AG04449 (cell line): ENCODE measurements at regions of chr17 and their contacts with region 1.

Region 1: DNA sequence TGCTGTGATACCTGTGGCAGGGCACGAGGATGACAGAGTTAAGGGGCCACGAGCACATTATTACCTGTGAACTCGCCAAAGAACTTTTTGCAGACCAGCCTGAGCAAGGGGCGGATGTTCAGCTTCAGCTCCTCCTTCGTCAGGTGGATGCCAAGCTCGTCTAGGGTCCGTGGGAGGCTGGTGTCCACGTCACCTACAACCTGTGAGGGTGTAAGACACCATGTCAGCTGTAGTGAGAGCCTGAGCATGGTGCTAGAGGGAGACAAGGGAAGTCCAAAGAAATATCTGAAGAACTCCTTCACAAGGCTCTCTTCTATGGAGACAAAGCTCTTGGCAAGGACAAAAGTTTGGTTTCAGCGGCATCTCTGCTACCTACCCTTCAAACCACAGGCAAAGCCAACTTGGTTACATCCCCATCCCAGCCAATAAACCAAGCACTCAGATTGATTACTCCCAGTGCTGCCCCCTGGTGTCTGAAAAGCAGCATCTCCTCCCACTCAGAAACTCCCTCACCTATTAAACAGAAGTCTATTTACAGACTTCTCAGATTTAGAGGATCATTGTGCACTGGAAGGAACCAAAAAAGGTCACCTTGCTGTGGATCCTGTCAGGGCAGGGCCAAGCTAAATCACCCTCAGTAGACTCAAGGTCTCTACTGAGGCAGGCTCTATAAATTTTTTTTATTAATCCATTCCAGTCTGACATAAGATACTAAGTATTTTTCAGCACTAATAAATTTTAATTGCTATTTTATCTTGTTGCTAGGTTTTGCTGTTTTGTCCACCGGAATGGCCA is 17.4 kb downstream of the HIGD1B start:
- DNase-seq: no peak
- H3K4me3 ChIP-seq: no peak overlapping the region
- CTCF ChIP-seq: peak; percentile 70

Region 2: GRCh38 chr17:44599298-44600175 is 265.5 kb before region 1 on chr17:
- CTCF ChIA-PET with region 1: no interaction called
- POLR2A ChIA-PET with region 1: no interaction called
- DNase-seq: peak; percentile 38
- H3K4me3 ChIP-seq: no peak overlapping the region
- CTCF ChIP-seq: no peak

Region 3: GRCh38 chr17:44794851-44795413 is 70.1 kb before region 1 on chr17:
- CTCF ChIA-PET with region 1: interaction called, 12 read pairs
- POLR2A ChIA-PET with region 1: no interaction called
- DNase-seq: peak; percentile 71
- H3K4me3 ChIP-seq: no peak overlapping the region
- CTCF ChIP-seq: no peak

Region 4: DNA sequence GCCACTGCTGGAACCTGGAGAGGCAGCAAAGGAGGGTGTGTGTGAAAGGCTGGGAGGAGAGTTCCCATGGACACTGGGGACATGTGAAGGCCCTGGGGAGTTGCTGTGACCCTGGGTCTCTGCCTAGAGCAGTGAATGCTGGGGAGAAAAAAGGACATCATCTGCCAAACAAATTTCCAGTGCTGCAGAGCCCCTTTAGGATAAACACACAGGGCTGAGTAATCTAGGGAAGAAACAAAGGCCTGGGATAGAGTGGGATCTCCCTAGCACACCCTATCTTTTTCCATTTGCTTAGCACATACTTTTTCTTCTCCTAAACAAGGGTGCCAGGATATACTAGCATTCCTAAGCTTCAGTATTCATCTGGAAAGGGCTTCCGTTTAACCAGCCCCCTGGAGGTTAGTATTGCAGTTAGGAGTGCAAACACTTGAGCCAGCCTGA is 20.7 kb before region 1 on chr17:
- CTCF ChIA-PET with region 1: interaction called, 80 read pairs
- POLR2A ChIA-PET with region 1: no interaction called
- DNase-seq: no peak
- H3K4me3 ChIP-seq: no peak overlapping the region
- CTCF ChIP-seq: peak; percentile 9

Region 5: GRCh38 chr17:44854192-44854591 is 10.9 kb before region 1 on chr17:
- CTCF ChIA-PET with region 1: interaction called, 80 read pairs
- POLR2A ChIA-PET with region 1: no interaction called
- DNase-seq: no peak
- H3K4me3 ChIP-seq: no peak overlapping the region
- CTCF ChIP-seq: no peak

Region 6: GRCh38 chr17:44878627-44879221 is 13.7 kb after region 1 on chr17:
- CTCF ChIA-PET with region 1: interaction called, 184 read pairs
- POLR2A ChIA-PET with region 1: no interaction called
- DNase-seq: no peak
- H3K4me3 ChIP-seq: no peak overlapping the region
- CTCF ChIP-seq: peak; percentile 53

Region 7: DNA sequence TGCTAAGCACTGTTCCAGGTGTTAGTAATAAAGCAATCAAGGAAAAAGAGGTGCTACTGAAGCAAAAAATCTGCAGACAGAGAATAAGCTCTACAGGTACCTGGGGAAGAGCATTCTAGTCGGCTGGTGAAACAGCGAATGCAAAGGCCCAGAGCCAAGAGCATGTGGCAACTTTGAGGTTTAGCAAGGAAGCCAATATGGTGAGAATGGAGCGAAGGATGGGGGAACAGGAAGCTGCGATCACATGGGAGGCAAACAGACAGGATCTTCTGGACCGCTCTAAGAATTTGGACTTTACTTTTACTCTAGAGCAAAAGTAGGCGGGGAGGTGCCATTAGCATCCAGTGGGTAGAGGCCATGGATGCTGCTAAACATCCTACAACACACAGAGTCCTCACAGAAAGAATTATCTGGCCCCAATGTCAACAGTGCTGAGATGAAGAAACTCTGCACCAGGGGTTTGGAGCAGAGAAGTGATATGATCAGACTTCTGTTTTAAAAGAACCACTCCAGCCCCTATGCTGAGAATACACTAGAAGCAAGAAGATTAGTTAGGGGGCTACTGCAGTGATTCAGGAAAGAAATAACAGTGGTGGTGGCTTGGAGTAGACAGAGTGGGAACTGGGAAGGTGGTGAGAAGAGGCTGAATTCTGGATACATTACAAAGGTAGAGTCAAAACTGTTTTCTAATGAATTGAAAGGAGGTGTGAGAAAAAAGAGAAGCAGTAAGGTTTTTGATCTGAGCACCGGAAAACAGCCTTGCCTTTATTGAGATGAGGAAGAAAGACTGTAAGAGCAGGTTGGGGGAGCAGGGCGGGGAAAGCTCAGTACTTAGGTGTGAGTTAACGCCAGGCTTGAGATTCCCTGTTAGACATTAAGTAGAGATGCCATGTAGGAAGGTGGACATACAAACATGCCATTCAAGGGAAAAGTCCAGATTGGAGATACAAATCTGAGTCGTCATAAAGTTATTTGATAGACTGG is 23.2 kb after region 1 on chr17:
- CTCF ChIA-PET with region 1: interaction called, 73 read pairs
- POLR2A ChIA-PET with region 1: no interaction called
- DNase-seq: no peak
- H3K4me3 ChIP-seq: no peak overlapping the region
- CTCF ChIP-seq: no peak